RWPE1 (cell line): ENCODE measurements at regions of chr5 and their contacts with region 1.

Region 1: DNA sequence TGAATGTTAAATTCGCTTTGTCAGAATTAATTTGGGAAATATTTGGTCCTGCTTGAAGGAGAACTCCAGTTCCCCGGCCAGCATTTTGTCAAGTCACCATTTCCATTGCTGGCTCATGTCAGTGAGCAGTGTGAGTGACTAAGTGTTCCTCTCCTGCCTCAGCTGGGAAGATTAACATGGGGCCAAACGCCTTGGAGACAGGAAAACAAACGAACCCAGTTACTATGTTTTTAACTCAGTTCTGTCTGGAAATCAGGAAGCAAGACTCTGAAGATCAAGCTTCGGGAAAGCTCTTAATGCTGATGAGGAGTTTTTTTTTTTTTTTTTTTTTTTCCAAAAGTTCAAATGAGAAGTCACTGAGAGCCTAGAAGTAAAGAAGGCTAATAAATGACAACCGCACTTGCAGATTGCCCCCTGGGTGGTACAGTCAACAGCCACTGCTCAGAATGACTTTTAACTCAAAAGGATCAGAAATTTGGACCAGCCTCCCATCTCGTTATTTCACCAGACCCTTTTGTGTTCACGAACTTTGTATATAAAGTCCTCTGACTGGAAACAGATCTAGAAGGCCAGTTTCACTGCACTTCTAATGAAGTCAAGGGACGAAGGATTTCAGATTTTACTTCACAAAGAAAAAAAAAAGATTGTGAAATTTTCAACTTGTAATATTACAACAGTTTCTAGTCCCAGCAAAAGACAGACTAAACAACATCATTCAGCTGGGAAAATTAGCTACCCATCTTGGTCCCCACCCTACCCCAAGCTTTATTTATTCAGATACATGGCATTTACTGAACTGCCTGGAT is 121.3 kb downstream of the LHFPL2 start:
- DNase-seq: peak; percentile 85
- H3K27ac ChIP-seq: no peak overlapping the region
- CTCF ChIP-seq: no peak

Region 2: DNA sequence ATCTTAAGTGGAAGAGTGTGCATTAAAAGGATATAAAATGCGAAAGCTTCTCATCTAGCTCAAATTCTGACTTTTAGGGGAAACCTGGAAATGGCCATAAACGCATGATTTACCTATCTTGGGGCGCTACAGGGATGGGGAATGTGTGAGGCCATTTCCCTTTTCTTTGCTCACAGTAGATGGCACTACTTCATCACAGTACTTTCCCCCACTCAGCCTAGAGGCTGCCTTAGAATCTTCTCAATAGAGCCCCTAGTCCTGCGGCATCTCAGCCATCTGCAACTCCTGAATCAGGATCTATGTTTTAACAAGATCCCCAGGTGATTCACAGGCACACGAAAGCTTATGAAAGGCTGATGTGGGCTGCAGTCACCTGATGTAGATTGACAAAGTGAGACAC is 10.6 kb after region 1 on chr5:
- CTCF ChIA-PET with region 1: interaction called, 11 read pairs
- POLR2A ChIA-PET with region 1: no interaction called
- DNase-seq: peak; percentile 65
- H3K27ac ChIP-seq: no peak overlapping the region
- CTCF ChIP-seq: peak; percentile 44

Region 3: GRCh38 chr5:78706825-78707224 is 179.6 kb after region 1 on chr5:
- CTCF ChIA-PET with region 1: no interaction called
- POLR2A ChIA-PET with region 1: no interaction called
- DNase-seq: no peak
- H3K27ac ChIP-seq: no peak overlapping the region
- CTCF ChIP-seq: no peak